SK-N-SH (cell line): ENCODE measurements at regions of chr7 and their contacts with region 1.

Region 1: DNA sequence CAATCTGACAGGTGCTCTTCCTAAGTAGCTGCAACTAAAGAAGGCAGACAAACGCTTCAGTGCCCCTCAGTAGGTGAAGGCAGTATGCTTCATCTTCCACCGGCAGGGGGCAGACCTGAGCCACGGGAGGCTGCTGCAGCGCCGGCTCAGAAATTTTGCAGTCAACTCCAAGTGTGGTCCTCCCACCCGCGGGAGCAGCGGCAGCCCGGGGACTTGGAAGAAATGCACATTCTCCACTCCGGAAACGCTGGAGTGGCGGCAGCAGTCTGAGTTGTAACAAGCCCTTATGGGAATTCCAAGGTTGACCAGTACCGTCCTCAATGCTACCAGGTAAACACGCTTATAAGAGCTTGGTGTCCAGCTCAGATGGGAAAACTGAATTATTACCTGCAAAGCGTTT is 3.4 kb downstream of the IGFBP3 start:
- DNase-seq: peak; percentile 87
- H3K4me3 ChIP-seq: peak overlapping the region; percentile 25 to 72
- H3K27ac ChIP-seq: no peak overlapping the region
- H3K4me1 ChIP-seq: peaks cover 8 to 28% of the 10 kb centered on the region in 2 experiments
- H3K27me3 ChIP-seq: no peaks in the 10 kb centered on the region
- CTCF ChIP-seq: peak; percentile 100
- EP300 ChIP-seq: no peak
- RAD21 ChIP-seq: peak; percentile 86

Region 2: DNA sequence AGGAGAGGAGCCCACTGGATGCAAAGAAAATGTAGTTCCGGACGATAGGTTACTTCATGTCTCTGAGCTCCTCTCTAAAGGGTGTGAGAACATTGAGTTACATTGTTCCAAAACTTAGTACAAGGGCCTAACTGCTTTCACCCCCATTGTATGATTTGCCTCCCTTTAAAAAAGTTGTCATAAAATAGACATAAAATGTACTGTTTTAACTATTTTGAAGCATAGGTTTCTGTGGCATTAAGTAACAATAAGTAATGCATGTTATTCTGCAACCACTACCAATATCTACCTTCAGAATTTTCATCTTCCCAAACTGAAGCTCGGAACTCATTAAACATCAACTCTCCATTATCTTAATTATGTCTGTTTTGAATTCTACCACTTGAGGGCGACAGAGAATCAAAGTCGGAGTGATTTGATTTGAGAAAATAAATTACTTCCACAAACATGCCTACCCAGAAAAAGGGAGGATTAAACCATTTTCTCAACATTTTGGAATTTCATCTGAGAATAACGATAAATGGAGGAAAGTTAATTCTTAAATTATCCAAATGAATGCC is 26.7 kb before region 1 on chr7:
- CTCF ChIA-PET with region 1: interaction called, 53 read pairs
- POLR2A ChIA-PET with region 1: no interaction called
- DNase-seq: peak; percentile 58
- H3K4me3 ChIP-seq: no peak overlapping the region
- H3K27ac ChIP-seq: no peak overlapping the region
- H3K4me1 ChIP-seq: peaks cover 0 to 8% of the 10 kb centered on the region in 2 experiments; a peak in 1 of 4 replicates
- H3K27me3 ChIP-seq: peaks cover 12% of the 10 kb centered on the region; the same call in 1 of the 2 replicates
- CTCF ChIP-seq: peak; percentile 97
- EP300 ChIP-seq: no peak
- RAD21 ChIP-seq: peak; percentile 76

Region 3: DNA sequence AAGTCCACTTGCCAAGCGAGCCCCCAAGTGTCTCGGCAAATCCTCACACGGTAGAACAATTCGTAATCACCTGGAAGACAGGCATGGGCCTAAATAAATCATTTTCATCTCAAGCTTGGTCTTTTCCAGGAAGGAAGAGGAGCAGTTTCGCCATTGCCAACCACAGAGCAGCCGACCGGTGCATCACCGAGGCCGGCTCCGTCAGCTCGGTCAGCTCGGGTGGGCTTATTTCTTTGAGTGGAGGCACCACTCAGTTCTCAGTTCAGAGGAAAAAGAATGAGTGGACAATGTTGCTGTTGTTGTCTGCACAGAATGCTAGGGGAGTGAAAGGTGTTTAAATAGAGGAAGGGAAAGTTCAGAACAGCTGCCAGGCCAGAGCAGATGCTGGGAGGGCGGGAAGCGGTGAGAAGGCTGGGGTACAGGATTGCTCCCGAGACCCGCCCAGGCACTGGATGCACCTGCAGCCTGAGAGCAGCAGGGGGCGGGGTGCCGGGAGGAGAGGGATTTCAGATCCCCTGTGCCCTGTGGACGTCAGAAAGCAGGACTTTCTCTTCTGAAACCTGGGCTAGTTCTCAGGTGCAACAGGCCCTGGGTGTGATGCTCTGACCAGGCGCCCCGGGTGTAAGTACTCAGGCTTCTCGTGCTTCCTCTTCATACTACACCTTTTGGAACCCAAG is 21.1 kb after region 1 on chr7:
- CTCF ChIA-PET with region 1: interaction called, 128 read pairs
- POLR2A ChIA-PET with region 1: no interaction called
- DNase-seq: no peak
- H3K4me3 ChIP-seq: no peak overlapping the region
- H3K27ac ChIP-seq: no peak overlapping the region
- H3K4me1 ChIP-seq: no peaks in the 10 kb centered on the region
- H3K27me3 ChIP-seq: no peaks in the 10 kb centered on the region
- CTCF ChIP-seq: peak; percentile 33
- EP300 ChIP-seq: no peak
- RAD21 ChIP-seq: peak; percentile 18; the same call in 1 of the 2 replicates

Region 4: DNA sequence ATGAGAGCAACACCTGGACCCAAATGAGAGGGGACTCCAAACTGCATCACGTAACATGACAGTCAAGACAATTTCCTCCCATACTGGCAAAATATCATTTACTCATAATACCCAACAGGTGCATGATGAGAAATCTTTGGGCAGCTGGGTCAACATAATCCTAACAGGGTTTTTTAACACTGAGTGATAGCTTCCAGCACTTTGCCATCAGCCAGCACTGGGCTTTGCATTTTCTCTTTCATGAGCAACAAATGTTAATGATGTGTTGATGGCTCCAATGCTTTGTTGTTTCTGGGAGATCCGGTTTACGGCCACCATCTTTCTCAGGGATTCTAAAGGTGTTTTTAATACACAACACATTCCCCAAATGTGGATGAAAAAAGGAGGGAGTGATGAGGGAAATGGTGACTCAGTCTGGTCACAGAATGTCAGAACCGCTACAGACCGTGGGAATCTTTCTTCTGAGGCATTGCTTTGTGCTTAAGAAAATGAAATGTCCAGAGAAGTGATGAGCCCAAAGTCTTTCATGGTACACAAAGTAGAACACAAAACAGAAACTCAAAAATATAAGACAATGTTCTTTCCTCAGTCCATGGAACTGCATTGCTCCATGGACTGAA is 709.1 kb after region 1 on chr7:
- CTCF ChIA-PET with region 1: no interaction called
- POLR2A ChIA-PET with region 1: no interaction called
- DNase-seq: no peak
- H3K4me3 ChIP-seq: no peak overlapping the region
- H3K27ac ChIP-seq: no peak overlapping the region
- H3K4me1 ChIP-seq: peaks cover 0 to 10% of the 10 kb centered on the region in 2 experiments; a peak in 1 of 4 replicates
- H3K27me3 ChIP-seq: no peaks in the 10 kb centered on the region
- CTCF ChIP-seq: no peak
- EP300 ChIP-seq: no peak
- RAD21 ChIP-seq: no peak

Region 5: DNA sequence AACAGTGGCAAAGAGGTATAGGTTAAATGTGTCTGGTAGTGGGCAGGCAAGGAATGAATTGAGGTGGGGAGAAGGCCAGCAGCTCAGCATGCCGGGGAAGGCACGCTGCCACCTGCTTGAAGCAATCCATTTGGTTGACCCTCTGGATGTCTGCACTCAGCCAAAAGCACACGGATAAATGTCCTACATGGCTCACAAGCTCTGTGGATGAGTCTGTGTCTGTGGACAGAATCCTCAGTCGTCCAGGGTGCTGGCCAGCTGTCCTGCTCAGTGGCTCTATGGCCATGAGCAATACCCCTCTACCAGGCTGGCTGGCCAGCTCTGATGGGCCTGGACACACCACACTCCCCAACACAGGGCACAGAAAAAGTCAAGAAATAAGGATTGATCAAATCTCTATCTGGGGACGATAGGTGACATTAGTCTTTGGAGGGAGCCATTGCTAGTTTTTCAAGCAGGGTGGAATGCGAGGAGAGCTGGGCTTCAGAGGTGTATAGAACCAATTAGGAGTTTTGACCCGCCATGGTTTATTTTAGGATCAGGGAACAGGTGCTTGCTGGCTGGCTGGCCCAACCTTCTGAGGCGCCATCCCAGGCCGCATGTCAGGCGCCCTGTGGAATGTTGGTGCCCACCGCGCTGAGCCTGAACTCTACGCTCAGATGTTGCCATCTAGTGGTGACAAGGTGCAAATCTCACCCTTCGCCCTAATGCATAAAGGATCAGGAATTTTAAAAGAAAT is 1170.8 kb after region 1 on chr7:
- CTCF ChIA-PET with region 1: interaction called, 291 read pairs
- POLR2A ChIA-PET with region 1: no interaction called
- DNase-seq: peak; percentile 77
- H3K4me3 ChIP-seq: no peak overlapping the region; a peak in 1 of 4 replicates
- H3K27ac ChIP-seq: no peak overlapping the region
- H3K4me1 ChIP-seq: peaks cover 2 to 10% of the 10 kb centered on the region in 2 experiments; a peak in 2 of 4 replicates
- H3K27me3 ChIP-seq: no peaks in the 10 kb centered on the region
- CTCF ChIP-seq: peak; percentile 99
- EP300 ChIP-seq: no peak
- RAD21 ChIP-seq: peak; percentile 99

Region 6: DNA sequence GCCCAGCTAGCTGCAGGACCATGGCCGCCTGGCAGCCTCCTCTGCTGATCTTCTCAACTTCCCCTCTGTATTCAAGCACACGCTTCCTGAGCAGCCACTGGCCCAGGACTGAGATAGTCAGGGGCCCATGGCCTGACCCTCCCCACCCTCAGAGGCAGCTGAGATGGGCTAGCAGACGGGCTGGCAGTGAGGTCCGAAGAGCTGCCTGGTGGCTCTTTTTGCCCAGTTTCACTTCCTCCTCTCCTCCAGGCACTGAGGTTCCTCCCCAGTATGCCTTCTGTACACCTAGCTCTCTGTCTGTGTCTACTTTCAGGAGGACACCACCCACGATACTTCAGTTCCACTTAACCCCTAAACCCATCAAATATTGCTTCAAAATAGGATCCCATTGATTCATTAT is 1268.7 kb after region 1 on chr7:
- CTCF ChIA-PET with region 1: interaction called, 227 read pairs
- POLR2A ChIA-PET with region 1: interaction called, 3 read pairs
- DNase-seq: no peak
- H3K4me3 ChIP-seq: no peak overlapping the region
- H3K27ac ChIP-seq: no peak overlapping the region
- H3K4me1 ChIP-seq: peaks cover 0 to 9% of the 10 kb centered on the region in 2 experiments; a peak in 1 of 4 replicates
- H3K27me3 ChIP-seq: peaks cover 14% of the 10 kb centered on the region; the same call in 1 of the 2 replicates
- CTCF ChIP-seq: no peak
- EP300 ChIP-seq: no peak
- RAD21 ChIP-seq: no peak